ENCODE measurements at regions of chr16 and their contacts with region 1.

Region 1: GRCh38 chr16:69610356-69610755 is 44.6 kb downstream of the NFAT5 start:
- DNase-seq: no peak
- ATAC-seq: no peak
- H3K4me3 ChIP-seq: no peak overlapping the region
- H3K27ac ChIP-seq: no peak overlapping the region
- H3K4me1 ChIP-seq: peaks cover 0 to 8% of the 10 kb centered on the region in 2 experiments; a peak in 3 of 5 replicates
- H3K27me3 ChIP-seq: no peaks in the 10 kb centered on the region
- CTCF ChIP-seq: no peak
- EP300 ChIP-seq: no peak
- POLR2A ChIP-seq: no peak
- RAD21 ChIP-seq: no peak

Region 2: DNA sequence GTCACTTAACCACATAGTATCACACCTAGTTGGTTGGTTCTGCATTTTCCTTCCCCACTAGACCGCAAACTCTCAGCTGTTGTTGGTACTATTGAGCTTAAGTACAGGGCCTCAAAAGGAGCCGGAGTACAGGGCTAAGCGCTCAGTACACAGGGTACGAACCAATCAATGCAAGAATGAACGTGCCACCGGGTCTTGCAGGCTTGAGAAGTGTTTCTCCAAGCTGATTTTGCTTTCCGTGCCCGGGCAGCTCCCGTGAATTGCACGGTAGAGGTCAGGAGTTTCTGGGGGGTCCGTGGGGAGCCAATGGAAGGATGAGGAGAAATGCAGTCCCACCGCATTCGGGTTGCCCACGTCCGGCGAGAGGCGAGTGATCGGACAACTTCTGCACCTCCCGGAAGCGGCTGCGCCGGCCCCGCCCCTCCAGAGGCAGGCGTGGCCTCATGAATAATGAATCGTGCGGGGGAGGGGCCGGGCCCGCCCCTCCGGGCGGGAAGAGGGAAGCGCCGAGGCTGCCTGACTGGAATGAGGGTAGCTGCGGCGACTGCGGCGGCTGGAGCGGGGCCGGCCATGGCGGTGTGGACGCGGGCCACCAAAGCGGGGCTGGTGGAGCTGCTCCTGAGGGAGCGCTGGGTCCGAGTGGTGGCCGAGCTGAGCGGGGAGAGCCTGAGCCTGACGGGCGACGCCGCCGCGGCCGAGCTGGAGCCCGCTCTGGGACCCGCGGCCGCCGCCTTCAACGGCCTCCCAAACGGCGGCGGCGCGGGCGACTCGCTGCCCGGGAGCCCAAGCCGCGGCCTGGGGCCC is 423.5 kb before region 1 on chr16 and contains the start of gene SNTB2:
- CTCF ChIA-PET with region 1: no interaction called
- POLR2A ChIA-PET with region 1: no interaction called
- in situ Hi-C with region 1: no loop called
- intact Hi-C with region 1: no loop called
- DNase-seq: peak; percentile 95 to 97 (median 96)
- ATAC-seq: peak; percentile 96
- H3K4me3 ChIP-seq: peak within 1 kb of the TSS; percentile 67
- H3K27ac ChIP-seq: peak within 1 kb of the TSS; percentile 78
- H3K4me1 ChIP-seq: peaks cover 15 to 19% of the 10 kb centered on the region in 2 experiments
- H3K27me3 ChIP-seq: no peaks in the 10 kb centered on the region
- CTCF ChIP-seq: no peak
- EP300 ChIP-seq: peak; percentile 21; the same call in 1 of the 2 replicates
- POLR2A ChIP-seq: peak; percentile 86
- RAD21 ChIP-seq: no peak
- polyA plus RNA-seq, gene SNTB2: 1.2 to 1.9 TPM

Region 3: DNA sequence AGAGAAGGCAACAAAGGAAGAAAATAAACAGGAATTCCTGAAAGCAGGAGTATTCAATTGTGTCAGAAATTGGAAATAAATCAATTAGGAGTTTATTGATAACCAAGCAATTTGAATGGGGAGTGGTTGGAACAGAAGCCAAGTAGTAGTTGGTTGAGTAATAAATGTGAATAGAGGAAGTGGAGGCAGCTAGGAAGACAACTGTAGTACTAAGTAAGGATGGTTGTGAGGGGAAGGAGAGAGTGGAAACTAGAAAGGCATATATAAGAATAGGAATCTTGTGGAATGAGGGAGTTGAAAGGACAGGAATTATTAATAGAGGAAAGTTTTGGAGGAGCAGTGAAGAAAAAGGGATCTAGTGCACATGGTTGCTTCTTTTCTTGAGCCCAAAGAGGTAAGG is 10.2 kb before region 1 on chr16:
- CTCF ChIA-PET with region 1: no interaction called
- POLR2A ChIA-PET with region 1: interaction called, 12 read pairs
- in situ Hi-C with region 1: no loop called
- intact Hi-C with region 1: no loop called
- DNase-seq: no peak
- ATAC-seq: no peak
- H3K4me3 ChIP-seq: no peak overlapping the region
- H3K27ac ChIP-seq: no peak overlapping the region
- H3K4me1 ChIP-seq: peaks cover 0 to 15% of the 10 kb centered on the region in 2 experiments; a peak in 2 of 5 replicates
- H3K27me3 ChIP-seq: no peaks in the 10 kb centered on the region
- CTCF ChIP-seq: no peak
- EP300 ChIP-seq: no peak
- POLR2A ChIP-seq: no peak
- RAD21 ChIP-seq: no peak

Measured in K562 (cell line).